CD8-positive, alpha-beta T cell (primary cell): ENCODE measurements at regions of chr14 and their contacts with region 1.

Region 1: DNA sequence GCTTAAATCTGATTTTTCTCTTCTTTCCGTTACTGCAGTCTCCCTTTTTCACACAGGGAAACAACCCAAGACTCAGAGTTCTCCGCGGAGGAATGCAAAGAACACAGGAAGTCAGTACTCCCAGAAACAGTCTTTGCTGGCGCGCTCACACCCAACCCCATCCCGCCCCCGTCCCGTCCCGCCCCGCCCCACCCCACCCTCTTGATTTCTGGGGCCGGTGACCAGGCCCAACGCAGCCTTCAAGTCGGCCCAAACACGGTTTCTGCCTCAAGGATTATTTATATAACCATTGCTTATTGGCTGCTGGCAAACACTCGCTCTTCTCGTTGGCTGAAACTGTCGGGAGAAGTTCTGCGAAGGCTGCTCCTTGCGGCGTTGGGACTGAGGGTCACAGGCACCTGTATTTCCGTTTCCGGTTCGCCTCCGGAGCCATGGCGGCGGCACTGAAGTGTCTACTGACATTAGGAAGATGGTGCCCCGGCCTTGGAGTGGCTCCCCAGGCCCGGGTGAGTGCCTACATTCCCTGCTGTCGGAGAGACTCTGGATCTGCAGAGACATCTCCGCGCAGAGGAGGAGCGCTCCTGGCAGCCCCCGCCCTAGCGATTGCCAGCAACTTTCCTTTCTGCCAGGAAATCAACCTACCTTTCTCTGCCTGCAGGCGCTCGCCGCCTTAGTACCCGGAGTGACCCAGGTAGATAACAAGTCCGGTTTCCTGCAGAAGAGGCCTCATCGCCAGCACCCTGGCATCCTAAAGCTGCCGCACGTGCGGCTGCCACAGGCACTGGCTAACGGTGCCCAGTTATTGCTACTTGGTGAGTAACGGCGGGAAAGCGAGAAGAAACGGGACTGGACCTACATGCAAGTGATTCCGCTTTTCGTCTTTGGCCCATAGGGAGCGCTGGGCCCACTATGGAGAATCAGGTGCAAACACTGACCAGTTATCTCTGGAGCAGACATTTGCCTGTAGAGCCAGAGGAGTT is at the start of gene METTL17:
- DNase-seq: peak; percentile 65 to 94 (median 85)
- ATAC-seq: peak; percentile 92
- H3K4me3 ChIP-seq: peak within 1 kb of the TSS; percentile 92 to 96
- H3K4me3 Mint-ChIP-seq: peak within 1 kb of the TSS; percentile 95
- H3K27ac ChIP-seq: peak within 1 kb of the TSS; percentile 65 to 73
- H3K27ac Mint-ChIP-seq: peak within 1 kb of the TSS; percentile 94
- H3K4me1 ChIP-seq: peaks cover 18% of the 10 kb centered on the region
- H3K4me1 Mint-ChIP-seq: peaks cover 28% of the 10 kb centered on the region
- H3K27me3 ChIP-seq: no peaks in the 10 kb centered on the region
- H3K27me3 Mint-ChIP-seq: no peaks in the 10 kb centered on the region
- CTCF ChIP-seq: peak; percentile 28
- total RNA-seq, gene METTL17: 82.3 to 88.8 TPM

Region 2: GRCh38 chr14:21024585-21025370 is 34.9 kb after region 1 on chr14 and contains the start of gene NDRG2:
- CTCF ChIA-PET with region 1: no interaction called
- POLR2A ChIA-PET with region 1: interaction called, 3 read pairs
- intact Hi-C with region 1: loop called in 1 of 2 experiments (anchors 1 kb)
- DNase-seq: peak; percentile 60 to 87 (median 80)
- ATAC-seq: peak; percentile 91
- H3K4me3 ChIP-seq: peak within 1 kb of the TSS; percentile 84 to 86
- H3K4me3 Mint-ChIP-seq: peak within 1 kb of the TSS; percentile 92
- H3K27ac ChIP-seq: peak within 1 kb of the TSS in 1 of 2 experiments; percentile 33
- H3K27ac Mint-ChIP-seq: peak within 1 kb of the TSS; percentile 70
- H3K4me1 ChIP-seq: peaks cover 13% of the 10 kb centered on the region
- H3K4me1 Mint-ChIP-seq: peaks cover 19% of the 10 kb centered on the region
- H3K27me3 ChIP-seq: no peaks in the 10 kb centered on the region
- H3K27me3 Mint-ChIP-seq: no peaks in the 10 kb centered on the region
- CTCF ChIP-seq: no peak
- total RNA-seq, gene NDRG2: 18.9 to 24.8 TPM

Region 3: GRCh38 chr14:21049271-21049673 is 59.4 kb after region 1 on chr14:
- CTCF ChIA-PET with region 1: no interaction called
- POLR2A ChIA-PET with region 1: no interaction called
- intact Hi-C with region 1: no loop called
- DNase-seq: no peak
- ATAC-seq: no peak
- H3K4me3 ChIP-seq: no peak overlapping the region
- H3K4me3 Mint-ChIP-seq: no peak overlapping the region
- H3K27ac ChIP-seq: no peak overlapping the region
- H3K27ac Mint-ChIP-seq: no peak overlapping the region
- H3K4me1 ChIP-seq: no peaks in the 10 kb centered on the region
- H3K4me1 Mint-ChIP-seq: peaks cover 3% of the 10 kb centered on the region
- H3K27me3 ChIP-seq: no peaks in the 10 kb centered on the region
- H3K27me3 Mint-ChIP-seq: peaks cover 24% of the 10 kb centered on the region
- CTCF ChIP-seq: no peak